ENCODE measurements at regions of chr16 and their contacts with region 1.

Region 1: GRCh38 chr16:28491970-28492474 is at the start of gene CLN3:
- DNase-seq: peak; percentile 83
- ATAC-seq: peak; percentile 97
- H3K4me3 ChIP-seq: peak within 1 kb of the TSS; percentile 93 to 97
- H3K27ac ChIP-seq: peak within 1 kb of the TSS; percentile 95
- H3K4me1 ChIP-seq: peaks cover 4% of the 10 kb centered on the region
- H3K27me3 ChIP-seq: no peaks in the 10 kb centered on the region
- CTCF ChIP-seq: no peak
- total RNA-seq, gene CLN3: 60.9 TPM

Region 2: GRCh38 chr16:28478506-28479200 is 13.4 kb before region 1 on chr16:
- CTCF ChIA-PET with region 1: interaction called, 10 read pairs
- POLR2A ChIA-PET with region 1: interaction called, 8 read pairs
- in situ Hi-C with region 1: no loop called
- intact Hi-C with region 1: no loop called
- DNase-seq: no peak
- ATAC-seq: no peak
- H3K4me3 ChIP-seq: no peak overlapping the region
- H3K27ac ChIP-seq: no peak overlapping the region
- H3K4me1 ChIP-seq: no peaks in the 10 kb centered on the region
- H3K27me3 ChIP-seq: no peaks in the 10 kb centered on the region
- CTCF ChIP-seq: no peak

Region 3: GRCh38 chr16:28621481-28622153 is 129.6 kb after region 1 on chr16:
- CTCF ChIA-PET with region 1: no interaction called
- POLR2A ChIA-PET with region 1: interaction called, 10 read pairs
- in situ Hi-C with region 1: no loop called
- intact Hi-C with region 1: no loop called
- DNase-seq: no peak
- ATAC-seq: no peak
- H3K4me3 ChIP-seq: no peak overlapping the region
- H3K27ac ChIP-seq: no peak overlapping the region
- H3K4me1 ChIP-seq: no peaks in the 10 kb centered on the region; the same call in 1 of the 2 replicates
- H3K27me3 ChIP-seq: no peaks in the 10 kb centered on the region
- CTCF ChIP-seq: no peak

Measured in Panc1 (cell line).